Activated B cell treated with CpG ODN at 0.5 μM for 24 hours (primary cell): ENCODE measurements at regions of chr1 and their contacts with region 1.

Region 1: DNA sequence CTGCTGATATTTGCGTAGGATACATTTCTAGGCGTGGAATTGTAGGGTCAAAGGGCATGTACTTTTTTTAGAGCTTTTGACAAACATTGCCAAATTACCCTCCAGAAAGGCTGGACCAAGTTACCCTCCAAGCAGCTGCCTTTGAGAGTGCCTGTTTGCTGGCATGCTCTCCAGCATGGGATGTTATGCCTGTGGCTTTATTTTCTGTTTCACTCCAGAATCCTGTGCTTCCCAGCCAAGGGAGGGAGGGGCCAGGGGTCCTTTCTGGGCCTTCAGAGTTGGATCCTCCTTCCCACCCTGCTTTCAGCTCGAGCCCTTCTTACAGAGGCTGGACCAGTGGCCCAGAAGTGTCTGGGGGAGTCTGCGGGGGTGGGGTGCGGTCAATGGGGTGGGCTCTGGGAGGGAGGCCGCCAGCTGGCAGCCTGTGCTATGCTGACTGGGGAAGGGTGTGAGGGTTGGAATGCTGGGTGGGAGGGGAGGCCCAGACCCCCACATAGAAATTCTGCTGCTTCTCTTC is 81.2 kb downstream of the EPHB2 start:
- DNase-seq: no peak
- ATAC-seq: no peak
- H3K4me3 Mint-ChIP-seq: no peak overlapping the region
- H3K27ac Mint-ChIP-seq: no peak overlapping the region
- H3K4me1 Mint-ChIP-seq: no peaks in the 10 kb centered on the region
- H3K27me3 Mint-ChIP-seq: no peaks in the 10 kb centered on the region
- CTCF ChIP-seq: no peak

Region 2: GRCh38 chr1:22641906-22642636 is 149.8 kb before region 1 on chr1:
- CTCF ChIA-PET with region 1: no interaction called
- POLR2A ChIA-PET with region 1: no interaction called
- intact Hi-C with region 1: no loop called
- DNase-seq: peak; percentile 67
- ATAC-seq: peak; percentile 93
- H3K4me3 Mint-ChIP-seq: no peak overlapping the region
- H3K27ac Mint-ChIP-seq: no peak overlapping the region
- H3K4me1 Mint-ChIP-seq: no peaks in the 10 kb centered on the region
- H3K27me3 Mint-ChIP-seq: peaks cover 16% of the 10 kb centered on the region
- CTCF ChIP-seq: peak; percentile 28

Region 3: GRCh38 chr1:22825494-22826194 is 33.8 kb after region 1 on chr1:
- CTCF ChIA-PET with region 1: no interaction called
- POLR2A ChIA-PET with region 1: interaction called, 14 read pairs
- intact Hi-C with region 1: no loop called
- DNase-seq: no peak
- ATAC-seq: no peak
- H3K4me3 Mint-ChIP-seq: no peak overlapping the region
- H3K27ac Mint-ChIP-seq: no peak overlapping the region
- H3K4me1 Mint-ChIP-seq: no peaks in the 10 kb centered on the region
- H3K27me3 Mint-ChIP-seq: peaks cover 3% of the 10 kb centered on the region
- CTCF ChIP-seq: no peak